ENCODE measurements at regions of chr14 and their contacts with region 1.

Region 1: DNA sequence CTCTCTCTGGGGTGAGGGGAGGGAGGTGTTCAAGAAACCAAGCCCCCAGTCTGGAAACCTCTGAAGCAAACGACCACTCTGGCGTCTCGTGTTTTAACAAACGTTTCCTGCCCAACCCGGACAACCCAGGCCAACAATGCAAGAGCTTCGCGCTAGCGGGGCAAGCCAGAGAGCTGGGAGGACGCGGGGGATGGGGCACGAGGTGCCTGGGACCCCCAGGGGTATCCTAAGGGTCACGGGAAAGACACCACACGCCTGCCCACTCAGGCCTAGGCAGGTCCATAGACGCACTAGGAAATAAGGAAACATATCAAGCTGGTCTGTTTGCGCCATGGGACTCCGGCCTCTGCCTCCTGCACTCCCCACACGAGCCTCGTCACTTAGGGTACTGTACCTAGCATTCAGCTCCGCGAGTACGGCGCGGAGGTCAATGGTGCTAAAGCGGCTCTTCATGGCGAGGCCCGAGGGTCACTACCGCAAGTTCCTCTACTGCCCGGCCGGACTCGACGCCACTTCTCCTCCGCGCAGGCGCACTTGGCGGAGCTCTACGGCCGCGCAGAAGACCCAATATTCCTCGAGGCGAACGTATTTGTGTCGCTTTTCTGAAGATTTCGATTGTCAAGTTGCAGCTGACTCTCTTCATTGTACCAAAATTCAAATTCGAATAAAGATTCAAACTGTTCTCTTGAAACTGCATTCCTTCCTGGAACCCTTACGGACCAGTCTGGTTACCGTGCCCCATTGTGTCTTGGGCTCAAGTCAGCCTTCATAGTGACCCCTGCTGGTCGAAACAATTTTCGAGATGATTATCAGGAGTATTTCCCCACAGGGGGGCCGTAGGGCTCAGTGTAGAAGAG is at the start of gene NEMF:
- DNase-seq: peak; percentile 80
- H3K4me3 Mint-ChIP-seq: peak within 1 kb of the TSS; percentile 96
- H3K27ac Mint-ChIP-seq: peak within 1 kb of the TSS; percentile 94
- H3K4me1 Mint-ChIP-seq: peaks cover 46% of the 10 kb centered on the region
- H3K27me3 Mint-ChIP-seq: no peaks in the 10 kb centered on the region
- total RNA-seq, gene NEMF: 64.7 to 73.3 TPM

Region 2: GRCh38 chr14:49598485-49599300 is 253.8 kb before region 1 on chr14 and contains the start of gene LRR1:
- CTCF ChIA-PET with region 1: interaction called, 3 read pairs
- POLR2A ChIA-PET with region 1: interaction called, 11 read pairs
- DNase-seq: peak; percentile 88
- H3K4me3 Mint-ChIP-seq: peak within 1 kb of the TSS; percentile 95
- H3K27ac Mint-ChIP-seq: peak within 1 kb of the TSS; percentile 95
- H3K4me1 Mint-ChIP-seq: peaks cover 47% of the 10 kb centered on the region
- H3K27me3 Mint-ChIP-seq: no peaks in the 10 kb centered on the region
- total RNA-seq, gene LRR1: 48.7 to 53.2 TPM

Region 3: GRCh38 chr14:49692811-49693734 is 159.5 kb before region 1 on chr14 and contains the start of gene KLHDC1:
- CTCF ChIA-PET with region 1: interaction called, 14 read pairs
- POLR2A ChIA-PET with region 1: interaction called, 8 read pairs
- DNase-seq: peak; percentile 77
- H3K4me3 Mint-ChIP-seq: peak within 1 kb of the TSS; percentile 72
- H3K27ac Mint-ChIP-seq: peak within 1 kb of the TSS; percentile 66
- H3K4me1 Mint-ChIP-seq: peaks cover 38% of the 10 kb centered on the region
- H3K27me3 Mint-ChIP-seq: no peaks in the 10 kb centered on the region
- total RNA-seq, gene KLHDC1: 2.4 to 2.6 TPM

Region 4: GRCh38 chr14:49867831-49868723 is 15.5 kb after region 1 on chr14:
- CTCF ChIA-PET with region 1: interaction called, 274 read pairs
- POLR2A ChIA-PET with region 1: interaction called, 159 read pairs
- DNase-seq: peak; percentile 99
- H3K4me3 Mint-ChIP-seq: peak overlapping the region; percentile 90
- H3K27ac Mint-ChIP-seq: peak overlapping the region; percentile 98
- H3K4me1 Mint-ChIP-seq: peaks cover 26% of the 10 kb centered on the region
- H3K27me3 Mint-ChIP-seq: no peaks in the 10 kb centered on the region

Region 5: DNA sequence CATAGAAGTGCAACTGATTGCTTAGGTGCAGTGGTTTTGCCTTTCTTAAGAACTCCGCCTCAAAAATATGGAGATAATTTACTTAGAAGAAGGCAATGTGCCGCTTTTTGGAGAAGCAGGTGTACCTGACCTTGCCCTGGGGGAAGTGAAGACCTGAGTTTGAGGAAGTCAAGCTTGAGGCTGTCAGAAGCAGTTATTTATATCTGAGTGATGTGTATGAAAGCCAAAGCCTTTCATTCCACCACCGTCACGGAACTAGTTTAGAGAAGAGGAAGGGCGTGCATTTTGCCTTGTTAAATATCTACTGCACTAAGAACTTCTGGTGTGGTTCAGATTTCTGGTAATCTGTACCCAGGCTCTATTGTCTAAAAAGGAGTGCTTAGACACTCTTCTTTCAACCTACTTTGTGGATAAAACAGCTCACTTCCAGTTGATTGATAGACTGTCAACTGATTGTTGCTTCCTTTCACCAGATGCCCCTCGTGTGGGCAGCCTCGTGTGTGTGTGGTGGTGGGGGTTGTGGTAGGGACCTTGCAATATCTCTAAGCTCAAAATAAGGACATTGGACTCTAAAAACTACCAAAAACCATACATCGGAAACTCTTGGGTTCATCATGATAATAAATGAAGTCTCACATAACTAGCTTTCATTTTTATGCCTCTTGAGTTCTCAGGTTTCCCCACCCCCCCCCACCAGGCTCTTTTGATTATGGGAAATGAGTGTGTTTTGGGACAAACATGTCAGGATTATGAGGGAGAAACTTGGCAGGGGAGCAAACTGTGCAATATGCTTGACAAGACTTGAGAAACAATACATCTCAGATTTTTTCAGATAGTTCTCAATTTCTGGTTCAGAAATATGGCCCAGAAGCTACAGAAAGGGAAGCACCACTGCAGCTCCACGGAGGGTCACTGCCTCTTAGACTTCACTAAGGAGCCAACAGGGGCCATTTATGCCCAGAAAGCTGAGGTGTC is 118.9 kb after region 1 on chr14:
- CTCF ChIA-PET with region 1: interaction called, 18 read pairs
- POLR2A ChIA-PET with region 1: interaction called, 32 read pairs
- DNase-seq: peak; percentile 63
- H3K4me3 Mint-ChIP-seq: peak overlapping the region; percentile 72
- H3K27ac Mint-ChIP-seq: peak overlapping the region; percentile 98
- H3K4me1 Mint-ChIP-seq: peaks cover 57% of the 10 kb centered on the region
- H3K27me3 Mint-ChIP-seq: no peaks in the 10 kb centered on the region

Region 6: GRCh38 chr14:50018201-50018932 is 165.8 kb after region 1 on chr14:
- CTCF ChIA-PET with region 1: no interaction called
- POLR2A ChIA-PET with region 1: no interaction called
- DNase-seq: no peak
- H3K4me3 Mint-ChIP-seq: no peak overlapping the region
- H3K27ac Mint-ChIP-seq: no peak overlapping the region
- H3K4me1 Mint-ChIP-seq: peaks cover 44% of the 10 kb centered on the region
- H3K27me3 Mint-ChIP-seq: no peaks in the 10 kb centered on the region

Region 7: GRCh38 chr14:50085570-50086320 is 233.2 kb after region 1 on chr14:
- CTCF ChIA-PET with region 1: interaction called, 5 read pairs
- POLR2A ChIA-PET with region 1: interaction called, 14 read pairs
- DNase-seq: no peak
- H3K4me3 Mint-ChIP-seq: peak overlapping the region; percentile 28
- H3K27ac Mint-ChIP-seq: peak overlapping the region; percentile 98
- H3K4me1 Mint-ChIP-seq: peaks cover 86% of the 10 kb centered on the region
- H3K27me3 Mint-ChIP-seq: peaks cover 4% of the 10 kb centered on the region

Region 8: DNA sequence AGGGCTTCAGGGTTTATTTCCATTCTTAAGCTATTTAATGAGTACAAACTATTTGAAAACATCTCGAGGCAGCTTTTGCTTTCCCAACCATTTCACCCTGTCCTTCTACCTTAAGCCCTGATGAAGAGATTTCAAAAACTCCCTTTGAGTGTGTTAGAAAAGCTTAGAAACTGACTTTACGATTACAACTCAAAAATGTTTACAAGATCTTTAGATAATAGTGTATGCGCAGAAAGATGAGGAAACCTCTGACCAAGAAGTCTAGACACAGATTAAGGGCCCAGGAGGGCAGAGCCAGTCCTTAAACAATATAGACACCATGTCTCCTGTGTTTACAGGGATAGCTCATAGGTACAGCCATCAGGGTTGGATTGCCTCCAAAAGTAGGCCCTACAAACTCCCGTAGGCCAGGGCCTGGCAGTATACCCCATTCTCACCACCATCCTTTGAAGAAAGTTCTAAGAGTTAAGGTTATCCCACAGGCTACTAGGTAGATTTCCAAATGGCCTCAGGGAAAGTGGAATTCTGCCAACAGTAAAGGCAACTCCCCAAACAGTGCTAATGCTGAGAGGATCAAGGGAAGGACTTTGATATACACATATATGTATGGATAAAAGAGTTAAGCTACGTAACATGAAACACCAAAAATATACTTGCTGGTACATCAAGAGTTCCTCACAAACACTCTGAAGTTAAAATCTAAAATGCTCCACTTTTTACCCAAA is 390.2 kb after region 1 on chr14:
- CTCF ChIA-PET with region 1: no interaction called
- POLR2A ChIA-PET with region 1: no interaction called
- DNase-seq: no peak
- H3K4me3 Mint-ChIP-seq: no peak overlapping the region
- H3K27ac Mint-ChIP-seq: no peak overlapping the region
- H3K4me1 Mint-ChIP-seq: no peaks in the 10 kb centered on the region
- H3K27me3 Mint-ChIP-seq: no peaks in the 10 kb centered on the region

Region 9: GRCh38 chr14:50311975-50312733 is 459.6 kb after region 1 on chr14 and contains the starts of genes DMAC2L and L2HGDH:
- CTCF ChIA-PET with region 1: interaction called, 6 read pairs
- POLR2A ChIA-PET with region 1: interaction called, 10 read pairs
- DNase-seq: peak; percentile 91
- H3K4me3 Mint-ChIP-seq: peak within 1 kb of the TSS; percentile 95
- H3K27ac Mint-ChIP-seq: peak within 1 kb of the TSS; percentile 84
- H3K4me1 Mint-ChIP-seq: peaks cover 35% of the 10 kb centered on the region
- H3K27me3 Mint-ChIP-seq: no peaks in the 10 kb centered on the region
- total RNA-seq, gene DMAC2L: 12.2 to 12.6 TPM
- total RNA-seq, gene L2HGDH: 9.7 to 10.0 TPM

Measured in activated CD4-positive, alpha-beta memory T cell treated with anti-CD3 and anti-CD28 coated beads, Interleukin-2, amount 10 ng/mL, durations not matched to agents 7 days and 5 days (primary cell).